Endothelial cell of umbilical vein (primary cell): ENCODE measurements at regions of chr14 and their contacts with region 1.

Region 1: GRCh38 chr14:23478111-23478759 is 8.7 kb downstream of the NGDN start:
- DNase-seq: peak; percentile 82
- H3K4me3 ChIP-seq: no peak overlapping the region
- H3K27ac ChIP-seq: no peak overlapping the region
- H3K4me1 ChIP-seq: no peaks in the 10 kb centered on the region
- H3K27me3 ChIP-seq: no peaks in the 10 kb centered on the region
- CTCF ChIP-seq: peak; percentile 49
- POLR2A ChIP-seq: no peak

Region 2: DNA sequence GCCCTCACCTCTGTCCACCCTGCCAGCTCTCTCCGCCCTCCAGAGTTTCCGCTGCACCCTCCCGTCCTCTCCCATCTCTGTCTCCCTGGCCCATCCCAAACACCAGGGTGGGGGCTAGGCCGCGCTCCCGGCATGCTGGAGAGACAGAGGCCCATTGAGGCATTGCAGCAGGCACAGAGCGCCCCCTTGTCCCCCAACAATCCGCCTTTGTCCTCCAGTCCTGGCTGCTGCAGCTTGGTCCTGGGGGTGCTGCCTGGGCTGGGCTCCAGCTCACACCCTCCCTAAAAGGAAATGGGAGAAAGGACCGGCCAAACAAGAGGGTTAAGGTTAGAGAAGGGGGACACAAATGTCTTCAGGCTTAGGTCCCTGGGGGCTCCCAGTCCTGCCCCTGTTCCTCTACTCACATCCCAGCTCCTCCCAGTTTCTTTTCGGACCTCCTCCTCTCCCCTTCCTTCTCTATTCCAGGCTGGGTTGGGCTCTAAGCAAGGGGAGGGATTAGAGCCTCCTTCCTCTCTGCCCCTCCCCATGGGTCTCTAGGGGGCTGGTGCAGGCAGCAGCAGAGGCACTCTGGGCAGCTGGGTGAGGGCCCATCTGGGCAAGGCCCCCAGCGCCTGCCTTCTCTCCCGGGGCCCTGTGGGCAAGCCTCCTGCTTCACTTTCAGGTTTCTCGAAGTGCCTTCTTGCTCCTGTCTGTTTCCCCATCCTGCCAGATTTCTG is 101.6 kb before region 1 on chr14 and contains the start of gene CMTM5:
- CTCF ChIA-PET with region 1: no interaction called
- POLR2A ChIA-PET with region 1: no interaction called
- dilution Hi-C with region 1: no loop called
- intact Hi-C with region 1: no loop called
- DNase-seq: no peak
- H3K4me3 ChIP-seq: no peak within 1 kb of the TSS
- H3K27ac ChIP-seq: no peak within 1 kb of the TSS
- H3K4me1 ChIP-seq: no peaks in the 10 kb centered on the region
- H3K27me3 ChIP-seq: peaks cover 0 to 3% of the 10 kb centered on the region in 2 experiments
- CTCF ChIP-seq: no peak
- POLR2A ChIP-seq: no peak
- total RNA-seq, gene CMTM5: not detected in 2 replicates

Region 3: GRCh38 chr14:23446291-23446851 is 31.9 kb before region 1 on chr14:
- CTCF ChIA-PET with region 1: interaction called, 4 read pairs
- POLR2A ChIA-PET with region 1: no interaction called
- dilution Hi-C with region 1: no loop called
- intact Hi-C with region 1: loop called (anchors 1 kb)
- DNase-seq: no peak
- H3K4me3 ChIP-seq: no peak overlapping the region
- H3K27ac ChIP-seq: no peak overlapping the region
- H3K4me1 ChIP-seq: no peaks in the 10 kb centered on the region
- H3K27me3 ChIP-seq: peaks cover 8 to 17% of the 10 kb centered on the region in 2 experiments
- CTCF ChIP-seq: no peak
- POLR2A ChIP-seq: no peak

Region 4: GRCh38 chr14:23494223-23494622 is 16.0 kb after region 1 on chr14:
- CTCF ChIA-PET with region 1: interaction called, 10 read pairs
- POLR2A ChIA-PET with region 1: no interaction called
- dilution Hi-C with region 1: no loop called
- intact Hi-C with region 1: no loop called
- DNase-seq: no peak
- H3K4me3 ChIP-seq: no peak overlapping the region
- H3K27ac ChIP-seq: no peak overlapping the region
- H3K4me1 ChIP-seq: no peaks in the 10 kb centered on the region
- H3K27me3 ChIP-seq: no peaks in the 10 kb centered on the region
- CTCF ChIP-seq: no peak
- POLR2A ChIP-seq: no peak

Region 5: DNA sequence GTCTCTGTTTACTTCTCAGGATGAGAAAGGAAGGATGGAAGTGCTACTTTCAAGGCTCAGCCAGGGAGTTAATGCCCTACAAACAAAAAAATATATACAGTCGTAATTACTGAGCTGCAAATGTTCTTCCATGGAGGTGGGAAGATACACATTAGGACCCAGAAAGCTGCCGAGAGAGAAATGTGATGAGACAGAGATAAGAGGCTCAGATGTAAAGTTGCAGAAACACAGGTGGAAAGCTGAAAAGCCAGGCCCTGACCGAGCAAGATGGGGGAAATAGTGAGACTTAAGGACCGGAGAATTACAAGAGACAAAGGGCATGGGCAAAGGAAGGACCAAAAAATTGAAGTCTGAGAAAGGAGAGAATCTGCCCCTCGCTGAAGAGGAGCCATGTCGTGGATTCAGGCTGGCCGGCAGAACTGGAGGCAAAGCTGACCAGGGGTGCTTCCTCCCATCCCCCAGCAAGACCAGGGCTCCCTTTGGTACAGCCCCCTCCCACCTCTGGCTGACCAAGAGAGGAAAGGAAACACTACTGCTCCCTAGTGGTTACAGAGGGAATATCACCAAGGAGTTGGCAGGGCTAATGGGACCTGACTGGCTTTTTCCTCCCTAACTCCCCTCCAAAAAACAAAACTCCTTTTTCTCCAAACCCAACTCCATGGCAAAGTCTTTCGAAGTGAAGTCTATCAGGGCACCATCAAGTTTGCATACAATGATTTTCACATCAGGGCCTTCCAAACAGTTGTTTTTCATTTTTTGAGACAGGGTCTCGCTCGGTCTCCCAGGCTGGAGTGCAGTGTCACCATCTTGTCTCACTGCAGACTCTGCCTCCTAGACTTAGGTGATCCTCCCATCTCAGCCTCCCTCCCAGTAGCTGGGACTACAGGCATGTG is 61.3 kb after region 1 on chr14:
- CTCF ChIA-PET with region 1: interaction called, 39 read pairs
- POLR2A ChIA-PET with region 1: interaction called, 5 read pairs
- dilution Hi-C with region 1: no loop called
- intact Hi-C with region 1: loop called (anchors 1 kb)
- DNase-seq: peak; percentile 45
- H3K4me3 ChIP-seq: no peak overlapping the region
- H3K27ac ChIP-seq: no peak overlapping the region
- H3K4me1 ChIP-seq: no peaks in the 10 kb centered on the region
- H3K27me3 ChIP-seq: no peaks in the 10 kb centered on the region
- CTCF ChIP-seq: peak; percentile 66 to 78
- POLR2A ChIP-seq: no peak

Region 6: GRCh38 chr14:23555882-23556699 is 77.9 kb after region 1 on chr14 and contains the start of gene THTPA:
- CTCF ChIA-PET with region 1: interaction called, 416 read pairs
- POLR2A ChIA-PET with region 1: interaction called, 5 read pairs
- dilution Hi-C with region 1: no loop called
- intact Hi-C with region 1: no loop called
- DNase-seq: peak; percentile 91
- H3K4me3 ChIP-seq: peak within 1 kb of the TSS; percentile 63 to 83 (median 79)
- H3K27ac ChIP-seq: peak within 1 kb of the TSS; percentile 52
- H3K4me1 ChIP-seq: peaks cover 14% of the 10 kb centered on the region
- H3K27me3 ChIP-seq: no peaks in the 10 kb centered on the region
- CTCF ChIP-seq: no peak
- POLR2A ChIP-seq: peak; percentile 74
- total RNA-seq, gene THTPA: 9.8 and 12.5 TPM in 2 replicates

Region 7: GRCh38 chr14:23567192-23568020 is 89.2 kb after region 1 on chr14 and contains the start of gene AP1G2:
- CTCF ChIA-PET with region 1: interaction called, 416 read pairs
- POLR2A ChIA-PET with region 1: no interaction called
- dilution Hi-C with region 1: no loop called
- intact Hi-C with region 1: loop called (anchors 1 kb)
- DNase-seq: peak; percentile 49
- H3K4me3 ChIP-seq: peak within 1 kb of the TSS; percentile 49 to 65 (median 60)
- H3K27ac ChIP-seq: no peak within 1 kb of the TSS
- H3K4me1 ChIP-seq: peaks cover 4% of the 10 kb centered on the region
- H3K27me3 ChIP-seq: peaks cover 2 to 3% of the 10 kb centered on the region in 2 experiments
- CTCF ChIP-seq: no peak
- POLR2A ChIP-seq: peak; percentile 75
- total RNA-seq, gene AP1G2: 30.5 and 39.0 TPM in 2 replicates

Region 8: DNA sequence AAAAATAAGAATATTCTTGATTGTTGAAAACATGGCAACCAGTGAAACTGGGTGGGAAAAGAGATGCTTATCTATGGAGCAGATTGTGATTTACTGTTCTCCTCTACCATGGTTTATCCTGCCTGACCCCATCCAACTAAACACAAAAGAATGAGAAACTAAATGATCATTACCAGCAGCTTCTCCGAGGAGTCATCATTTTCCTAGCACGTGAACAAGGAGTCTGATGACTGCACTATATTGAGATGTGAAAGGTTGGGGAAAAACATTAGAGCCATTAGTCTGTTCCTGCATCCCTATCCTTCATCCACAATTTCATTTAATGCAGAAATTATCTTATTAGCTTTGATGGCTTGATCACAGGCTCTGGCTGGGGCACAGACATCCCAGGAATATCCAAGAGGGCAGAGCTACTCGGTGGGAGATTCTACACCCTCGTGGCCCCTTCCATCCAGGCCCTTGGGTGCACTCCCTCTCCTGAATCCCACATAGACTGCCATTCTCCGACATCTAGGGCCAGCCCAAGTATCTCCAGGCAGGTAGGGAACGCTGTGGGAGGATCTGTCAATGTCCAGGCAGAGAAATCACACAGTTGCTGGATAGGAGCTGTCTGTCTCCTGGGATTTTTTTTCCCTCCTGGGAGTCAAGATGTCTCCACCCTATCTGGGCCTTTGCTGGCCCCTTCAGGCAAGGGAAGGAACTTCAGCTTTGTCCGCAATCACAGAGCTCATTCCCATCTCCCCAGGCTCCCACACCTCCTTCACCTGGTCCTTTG is 432.1 kb after region 1 on chr14:
- CTCF ChIA-PET with region 1: interaction called, 12 read pairs
- POLR2A ChIA-PET with region 1: no interaction called
- dilution Hi-C with region 1: no loop called
- intact Hi-C with region 1: no loop called
- DNase-seq: peak; percentile 58
- H3K4me3 ChIP-seq: no peak overlapping the region
- H3K27ac ChIP-seq: no peak overlapping the region
- H3K4me1 ChIP-seq: no peaks in the 10 kb centered on the region
- H3K27me3 ChIP-seq: peaks cover 0 to 3% of the 10 kb centered on the region in 2 experiments
- CTCF ChIP-seq: peak; percentile 66 to 84
- POLR2A ChIP-seq: no peak